ENCODE measurements at regions of chr9 and their contacts with region 1.

Region 1: GRCh38 chr9:111298731-111299598 is 31.1 kb downstream of the OR2K2 start:
- DNase-seq: peak in 1 of 2 donors; percentile 69
- ATAC-seq: peak; percentile 92
- H3K4me3 ChIP-seq: peak overlapping the region in 1 of 2 donors; percentile 48
- H3K27ac ChIP-seq: peak overlapping the region in 1 of 2 donors; percentile 81
- H3K4me1 ChIP-seq: no peaks in the 10 kb centered on the region
- H3K27me3 ChIP-seq: no peaks in the 10 kb centered on the region

Region 2: DNA sequence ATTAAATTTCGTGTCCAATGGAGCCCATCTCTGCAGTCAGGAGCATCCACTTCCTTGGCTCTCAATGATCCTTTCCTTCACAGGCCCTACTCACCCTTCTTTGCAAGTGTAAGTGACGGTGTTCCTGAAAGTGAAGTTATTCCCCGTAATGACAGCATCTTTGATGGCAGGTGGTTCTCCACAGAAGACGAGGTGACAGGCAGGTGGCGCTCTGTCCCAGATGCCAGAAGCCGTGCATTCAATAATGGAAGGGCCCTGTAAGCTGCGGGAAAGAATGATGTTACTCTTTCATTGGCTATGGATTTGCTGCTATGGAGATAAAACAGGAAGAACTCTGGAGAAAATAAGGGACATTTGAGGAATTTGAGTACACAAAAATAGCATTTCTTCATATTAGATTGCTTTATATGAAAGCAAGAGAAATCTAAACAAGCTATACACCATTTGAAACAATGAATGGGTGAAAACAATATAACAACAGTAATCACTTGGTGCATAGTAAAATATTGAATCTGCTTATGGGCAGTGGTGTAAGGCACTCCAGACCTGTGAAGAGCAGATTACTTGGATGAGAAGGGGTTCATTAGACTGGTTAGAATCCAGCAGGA is 871.4 kb before region 1 on chr9:
- intact Hi-C with region 1: loop called in 1 of 2 experiments (anchors 10 kb)
- DNase-seq: peak; percentile 54 to 79
- ATAC-seq: no peak
- H3K4me3 ChIP-seq: no peak overlapping the region
- H3K27ac ChIP-seq: no peak overlapping the region
- H3K4me1 ChIP-seq: no peaks in the 10 kb centered on the region
- H3K27me3 ChIP-seq: no peaks in the 10 kb centered on the region

Region 3: DNA sequence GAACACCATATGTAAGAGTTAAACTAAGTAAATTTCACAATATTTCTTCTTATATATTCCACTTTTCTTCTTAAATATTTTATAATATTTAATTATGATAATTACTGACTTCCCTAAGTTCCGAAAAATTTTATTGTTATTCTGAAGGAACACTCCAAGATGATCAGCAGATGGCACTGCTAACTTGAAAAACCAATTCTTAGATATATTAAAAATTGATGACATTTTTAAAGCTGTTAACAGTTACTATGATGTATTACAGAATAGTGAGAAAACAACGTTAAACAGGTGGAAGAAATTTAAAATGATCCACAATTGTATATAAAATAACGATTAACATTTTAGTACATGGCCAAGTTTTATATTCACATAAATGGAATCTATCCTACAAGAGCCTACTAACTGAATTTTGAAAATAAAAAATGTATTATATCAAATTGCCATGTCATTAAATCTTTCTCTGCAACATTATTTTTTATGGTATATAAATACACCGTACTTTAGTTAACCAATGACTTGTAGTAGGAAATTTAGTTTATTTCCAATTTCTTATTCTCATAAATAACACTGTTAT is 660.5 kb before region 1 on chr9:
- intact Hi-C with region 1: loop called (anchors 2 to 5 kb)
- DNase-seq: no peak
- ATAC-seq: no peak
- H3K4me3 ChIP-seq: no peak overlapping the region
- H3K27ac ChIP-seq: no peak overlapping the region
- H3K4me1 ChIP-seq: no peaks in the 10 kb centered on the region
- H3K27me3 ChIP-seq: no peaks in the 10 kb centered on the region

Region 4: DNA sequence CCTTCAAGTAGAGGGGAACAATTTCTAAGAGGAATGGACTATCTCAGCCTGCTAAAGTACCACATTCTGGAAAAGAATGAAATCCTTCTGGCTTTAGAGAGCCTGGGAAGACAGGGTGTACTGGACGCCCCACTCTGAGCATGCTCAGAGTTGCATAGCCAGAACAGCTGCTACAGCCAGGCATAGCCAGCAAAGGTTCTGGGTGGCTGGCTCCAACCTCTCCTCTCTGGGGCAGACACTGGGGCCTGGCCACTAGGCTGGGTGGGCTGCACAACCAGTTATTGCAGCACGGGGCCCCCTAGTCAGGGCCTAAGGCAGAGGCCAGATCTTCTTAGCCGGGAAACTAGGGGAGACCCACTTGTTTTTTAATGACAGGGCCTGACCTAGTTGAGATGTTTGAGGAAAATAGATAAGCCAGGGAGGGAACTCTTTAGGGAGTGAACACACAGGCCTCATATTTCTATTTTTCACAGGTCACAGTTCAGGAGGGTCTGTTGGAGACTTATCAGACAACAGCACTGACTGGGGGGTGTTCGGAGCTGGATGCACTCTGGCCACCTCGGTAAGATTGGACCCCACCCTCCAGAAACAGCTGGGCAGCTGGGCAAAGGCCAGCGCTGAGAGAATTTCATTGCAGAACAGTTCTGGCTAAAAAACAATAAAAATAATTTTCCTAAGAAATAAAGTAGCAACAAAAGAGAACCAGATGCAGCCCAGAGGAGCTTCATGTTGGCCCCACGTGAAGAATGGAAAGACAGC is 403.6 kb before region 1 on chr9:
- intact Hi-C with region 1: loop called in 1 of 2 experiments (anchors 10 kb)
- DNase-seq: peak; percentile 63 to 76
- ATAC-seq: peak; percentile 78
- H3K4me3 ChIP-seq: no peak overlapping the region
- H3K27ac ChIP-seq: peak overlapping the region in 1 of 2 donors; percentile 72
- H3K4me1 ChIP-seq: peaks cover 12 to 14% of the 10 kb centered on the region in 2 donors
- H3K27me3 ChIP-seq: no peaks in the 10 kb centered on the region

Region 5: GRCh38 chr9:111456529-111456928 is 157.6 kb after region 1 on chr9:
- intact Hi-C with region 1: no loop called
- DNase-seq: no peak
- ATAC-seq: no peak
- H3K4me3 ChIP-seq: no peak overlapping the region
- H3K27ac ChIP-seq: no peak overlapping the region
- H3K4me1 ChIP-seq: peaks cover 0 to 2% of the 10 kb centered on the region in 2 donors
- H3K27me3 ChIP-seq: no peaks in the 10 kb centered on the region

Measured in aorta (tissue), 5 donors.